Activated CD4-positive, alpha-beta T cell treated with anti-CD3 and anti-CD28 coated beads for 36 hours (primary cell): ENCODE measurements at regions of chr17 and their contacts with region 1.

Region 1: DNA sequence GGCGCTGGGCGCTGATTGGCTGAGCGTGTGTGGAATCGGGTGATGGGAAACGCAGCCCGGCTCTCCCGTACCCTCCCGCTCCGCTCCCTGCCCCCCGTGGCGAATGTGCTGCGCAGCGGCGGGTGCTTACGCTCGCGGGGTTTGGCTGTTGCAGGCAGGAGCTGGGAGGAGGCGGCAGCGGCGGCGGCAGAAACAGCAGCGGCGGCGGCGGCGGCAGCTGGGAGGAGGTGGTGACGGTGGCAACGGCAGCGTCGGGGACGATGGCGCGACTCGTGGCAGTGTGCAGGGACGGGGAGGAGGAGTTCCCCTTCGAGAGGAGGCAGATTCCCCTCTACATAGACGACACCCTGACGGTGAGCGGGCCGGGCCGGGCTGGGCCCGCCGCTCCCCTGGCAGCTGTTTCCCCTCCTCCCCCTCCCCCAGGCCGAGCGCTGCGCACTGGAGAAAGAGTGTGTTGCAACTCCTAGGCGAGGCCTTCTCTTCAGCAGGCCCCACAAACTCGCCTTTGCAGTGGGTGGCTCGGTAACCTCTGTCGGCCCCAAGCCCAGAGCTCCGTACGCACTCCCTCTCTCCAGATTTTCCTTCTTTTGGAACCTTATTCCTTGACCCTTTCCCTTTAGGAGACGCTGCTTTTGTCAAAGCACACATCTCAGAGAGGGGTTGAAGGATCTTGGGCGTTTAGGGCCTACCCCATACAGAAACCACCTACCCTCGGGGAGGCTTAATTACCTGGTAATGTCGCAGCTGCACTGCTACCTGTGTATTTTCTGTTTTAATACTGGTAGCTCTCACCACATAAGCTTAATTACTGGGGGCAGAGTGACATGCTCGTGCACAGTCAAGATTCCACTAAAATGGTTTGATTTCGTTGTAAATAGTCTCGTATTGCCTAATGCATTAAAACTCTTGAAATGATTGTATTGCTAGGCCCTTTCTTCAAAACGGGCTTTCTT is 1.0 kb downstream of the GGNBP2 start:
- DNase-seq: peak; percentile 98
- ATAC-seq: peak; percentile 81
- H3K4me3 Mint-ChIP-seq: peak overlapping the region; percentile 96
- H3K27ac Mint-ChIP-seq: peak overlapping the region; percentile 95
- H3K4me1 Mint-ChIP-seq: peaks cover 37% of the 10 kb centered on the region
- H3K27me3 Mint-ChIP-seq: no peaks in the 10 kb centered on the region

Region 2: GRCh38 chr17:35587074-35587971 is 958.4 kb before region 1 on chr17 and contains the start of gene AP2B1:
- CTCF ChIA-PET with region 1: no interaction called
- POLR2A ChIA-PET with region 1: no interaction called
- intact Hi-C with region 1: loop called in 1 of 2 experiments (anchors 2 kb)
- DNase-seq: peak; percentile 96
- ATAC-seq: peak; percentile 94
- H3K4me3 Mint-ChIP-seq: peak within 1 kb of the TSS; percentile 98
- H3K27ac Mint-ChIP-seq: peak within 1 kb of the TSS; percentile 98
- H3K4me1 Mint-ChIP-seq: peaks cover 25% of the 10 kb centered on the region
- H3K27me3 Mint-ChIP-seq: no peaks in the 10 kb centered on the region
- total RNA-seq, gene AP2B1: 166 to 184 TPM

Region 3: GRCh38 chr17:36524428-36524876 is 21.3 kb before region 1 on chr17:
- CTCF ChIA-PET with region 1: no interaction called
- POLR2A ChIA-PET with region 1: no interaction called
- intact Hi-C with region 1: loop called in 1 of 2 experiments (anchors 2 kb)
- DNase-seq: peak; percentile 29
- ATAC-seq: peak; percentile 91
- H3K4me3 Mint-ChIP-seq: no peak overlapping the region
- H3K27ac Mint-ChIP-seq: peak overlapping the region; percentile 44
- H3K4me1 Mint-ChIP-seq: peaks cover 30% of the 10 kb centered on the region
- H3K27me3 Mint-ChIP-seq: no peaks in the 10 kb centered on the region

Region 4: GRCh38 chr17:36591434-36592315 is 45.9 kb after region 1 on chr17 and contains the start of gene DHRS11:
- CTCF ChIA-PET with region 1: no interaction called
- POLR2A ChIA-PET with region 1: interaction called, 3 read pairs
- intact Hi-C with region 1: loop called (anchors 2 kb)
- DNase-seq: peak; percentile 88
- ATAC-seq: peak; percentile 93
- H3K4me3 Mint-ChIP-seq: peak within 1 kb of the TSS; percentile 69
- H3K27ac Mint-ChIP-seq: peak within 1 kb of the TSS; percentile 73
- H3K4me1 Mint-ChIP-seq: peaks cover 25% of the 10 kb centered on the region
- H3K27me3 Mint-ChIP-seq: no peaks in the 10 kb centered on the region
- total RNA-seq, gene DHRS11: 9.2 to 10.2 TPM

Region 5: GRCh38 chr17:36722121-36722902 is 176.6 kb after region 1 on chr17:
- CTCF ChIA-PET with region 1: no interaction called
- POLR2A ChIA-PET with region 1: no interaction called
- intact Hi-C with region 1: loop called in 1 of 2 experiments (anchors 1 kb)
- DNase-seq: peak; percentile 91
- ATAC-seq: peak; percentile 94
- H3K4me3 Mint-ChIP-seq: peak overlapping the region; percentile 76
- H3K27ac Mint-ChIP-seq: peak overlapping the region; percentile 98
- H3K4me1 Mint-ChIP-seq: peaks cover 46% of the 10 kb centered on the region
- H3K27me3 Mint-ChIP-seq: no peaks in the 10 kb centered on the region

Region 6: GRCh38 chr17:37358830-37359681 is 813.3 kb after region 1 on chr17:
- CTCF ChIA-PET with region 1: no interaction called
- POLR2A ChIA-PET with region 1: no interaction called
- intact Hi-C with region 1: loop called in 1 of 2 experiments (anchors 1 kb)
- DNase-seq: peak; percentile 96
- ATAC-seq: peak; percentile 98
- H3K4me3 Mint-ChIP-seq: peak overlapping the region; percentile 88
- H3K27ac Mint-ChIP-seq: peak overlapping the region; percentile 83
- H3K4me1 Mint-ChIP-seq: peaks cover 23% of the 10 kb centered on the region
- H3K27me3 Mint-ChIP-seq: no peaks in the 10 kb centered on the region

Region 7: DNA sequence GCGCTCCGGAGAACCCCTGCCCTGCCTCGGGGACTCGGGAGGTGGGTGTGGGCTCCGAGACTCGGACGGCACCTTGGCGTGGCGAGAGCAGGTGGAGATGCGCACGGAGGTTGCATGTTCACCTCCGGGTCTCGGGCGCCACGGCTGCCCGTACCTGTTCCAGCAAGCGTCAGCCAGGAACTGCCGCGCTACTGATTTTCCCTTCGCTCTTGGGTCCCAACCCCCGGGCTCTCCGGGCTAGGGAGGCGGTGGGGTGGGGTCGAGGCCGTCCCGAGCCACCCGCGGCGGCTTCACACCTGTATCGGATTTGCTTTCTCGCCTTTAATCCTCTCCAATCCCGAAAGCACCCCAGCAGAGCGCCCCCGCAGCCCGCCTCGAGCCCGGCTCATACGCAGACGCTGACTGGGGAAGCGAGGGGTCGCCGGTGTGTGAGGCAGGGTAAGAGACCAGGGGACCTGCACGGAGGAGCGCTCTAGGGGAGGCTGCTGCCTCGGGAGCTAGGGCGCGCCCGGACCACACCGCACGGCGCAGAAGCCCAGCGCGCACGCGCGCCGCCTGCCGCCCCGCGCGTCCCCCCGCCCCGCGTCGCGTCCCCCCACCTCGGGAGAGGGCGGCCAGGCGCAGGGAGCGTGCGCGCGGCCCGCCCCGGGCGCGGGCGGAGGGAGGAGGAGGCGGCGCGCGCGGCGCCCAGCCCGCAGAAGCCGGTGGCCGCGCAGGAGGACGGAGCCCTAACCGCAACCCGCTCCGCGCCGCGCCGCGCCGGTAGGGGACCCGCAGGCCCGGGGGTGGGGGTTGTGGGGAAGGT is 943.7 kb after region 1 on chr17 and contains the start of gene DUSP14:
- CTCF ChIA-PET with region 1: no interaction called
- POLR2A ChIA-PET with region 1: no interaction called
- intact Hi-C with region 1: loop called in 1 of 2 experiments (anchors 2 kb)
- DNase-seq: peak; percentile 88
- ATAC-seq: peak; percentile 74
- H3K4me3 Mint-ChIP-seq: peak within 1 kb of the TSS; percentile 88
- H3K27ac Mint-ChIP-seq: peak within 1 kb of the TSS; percentile 93
- H3K4me1 Mint-ChIP-seq: peaks cover 44% of the 10 kb centered on the region
- H3K27me3 Mint-ChIP-seq: no peaks in the 10 kb centered on the region
- total RNA-seq, gene DUSP14: 11.9 to 13.1 TPM